Calu3 (cell line): ENCODE measurements at regions of chr4 and their contacts with region 1.

Region 1: GRCh38 chr4:41360214-41360920 is 103.6 kb downstream of the UCHL1 start:
- DNase-seq: peak; percentile 67
- H3K4me3 Mint-ChIP-seq: peak overlapping the region; percentile 91
- H3K27ac Mint-ChIP-seq: peak overlapping the region; percentile 65
- H3K4me1 Mint-ChIP-seq: peaks cover 21% of the 10 kb centered on the region
- H3K27me3 Mint-ChIP-seq: no peaks in the 10 kb centered on the region
- CTCF ChIP-seq: no peak

Region 2: GRCh38 chr4:41287050-41287449 is 73.3 kb before region 1 on chr4:
- CTCF ChIA-PET with region 1: no interaction called
- intact Hi-C with region 1: loop called (anchors 2 kb)
- DNase-seq: no peak
- H3K4me3 Mint-ChIP-seq: no peak overlapping the region
- H3K27ac Mint-ChIP-seq: peak overlapping the region; percentile 13
- H3K4me1 Mint-ChIP-seq: peaks cover 33% of the 10 kb centered on the region
- H3K27me3 Mint-ChIP-seq: no peaks in the 10 kb centered on the region
- CTCF ChIP-seq: no peak

Region 3: GRCh38 chr4:41432881-41433280 is 72.5 kb after region 1 on chr4:
- CTCF ChIA-PET with region 1: no interaction called
- intact Hi-C with region 1: loop called (anchors 5 kb)
- DNase-seq: no peak
- H3K4me3 Mint-ChIP-seq: no peak overlapping the region
- H3K27ac Mint-ChIP-seq: peak overlapping the region; percentile 56
- H3K4me1 Mint-ChIP-seq: peaks cover 44% of the 10 kb centered on the region
- H3K27me3 Mint-ChIP-seq: no peaks in the 10 kb centered on the region
- CTCF ChIP-seq: no peak

Region 4: GRCh38 chr4:41505161-41505661 is 144.8 kb after region 1 on chr4:
- CTCF ChIA-PET with region 1: no interaction called
- intact Hi-C with region 1: loop called (anchors 2 kb)
- DNase-seq: peak; percentile 39
- H3K4me3 Mint-ChIP-seq: no peak overlapping the region
- H3K27ac Mint-ChIP-seq: peak overlapping the region; percentile 91
- H3K4me1 Mint-ChIP-seq: peaks cover 50% of the 10 kb centered on the region
- H3K27me3 Mint-ChIP-seq: no peaks in the 10 kb centered on the region
- CTCF ChIP-seq: no peak

Region 5: GRCh38 chr4:41611881-41612871 is 251.8 kb after region 1 on chr4:
- CTCF ChIA-PET with region 1: interaction called, 3 read pairs
- intact Hi-C with region 1: loop called (anchors 5 kb)
- DNase-seq: peak; percentile 55
- H3K4me3 Mint-ChIP-seq: peak overlapping the region; percentile 55
- H3K27ac Mint-ChIP-seq: peak overlapping the region; percentile 57
- H3K4me1 Mint-ChIP-seq: peaks cover 27% of the 10 kb centered on the region
- H3K27me3 Mint-ChIP-seq: no peaks in the 10 kb centered on the region
- CTCF ChIP-seq: no peak

Region 6: GRCh38 chr4:41644288-41644914 is 284.0 kb after region 1 on chr4:
- CTCF ChIA-PET with region 1: interaction called, 4 read pairs
- intact Hi-C with region 1: loop called (anchors 5 kb)
- DNase-seq: peak; percentile 65
- H3K4me3 Mint-ChIP-seq: peak overlapping the region; percentile 41
- H3K27ac Mint-ChIP-seq: peak overlapping the region; percentile 47
- H3K4me1 Mint-ChIP-seq: peaks cover 8% of the 10 kb centered on the region
- H3K27me3 Mint-ChIP-seq: no peaks in the 10 kb centered on the region
- CTCF ChIP-seq: peak; percentile 65

Region 7: DNA sequence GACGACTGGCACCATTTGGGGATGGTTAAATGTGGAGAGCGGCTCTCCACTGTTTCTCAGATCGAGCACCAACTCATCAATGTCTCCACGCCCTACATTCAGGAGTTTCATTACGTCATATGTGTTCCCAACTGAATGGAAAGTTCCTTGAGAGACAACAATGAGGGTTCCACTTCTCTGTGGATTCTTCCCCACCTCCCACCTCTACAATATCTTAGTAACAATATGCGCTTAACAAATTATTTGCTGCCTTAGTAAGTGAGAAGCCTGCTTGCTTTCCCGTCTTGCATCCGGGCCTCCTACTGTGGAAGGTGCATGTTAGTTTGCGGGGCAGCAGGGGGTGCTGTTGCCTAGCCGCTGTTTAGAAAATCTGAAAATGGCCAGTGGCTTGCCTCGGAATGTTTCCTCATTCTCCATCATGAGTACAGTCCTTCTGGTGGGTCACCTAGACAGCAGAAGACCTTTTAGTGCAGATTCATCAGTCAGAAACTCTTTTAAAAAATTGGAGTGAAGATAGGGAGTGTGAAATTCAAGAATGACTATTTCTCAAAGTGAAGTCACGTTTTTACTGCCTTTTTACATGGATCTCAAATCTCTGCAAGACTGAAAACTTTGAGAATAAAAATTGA is 332.5 kb after region 1 on chr4:
- CTCF ChIA-PET with region 1: no interaction called
- intact Hi-C with region 1: no loop called
- DNase-seq: peak; percentile 49
- H3K4me3 Mint-ChIP-seq: no peak overlapping the region
- H3K27ac Mint-ChIP-seq: no peak overlapping the region
- H3K4me1 Mint-ChIP-seq: no peaks in the 10 kb centered on the region
- H3K27me3 Mint-ChIP-seq: no peaks in the 10 kb centered on the region
- CTCF ChIP-seq: peak; percentile 69